Astrocyte of the cerebellum (primary cell): ENCODE measurements at regions of chr16 and their contacts with region 1.

Region 1: GRCh38 chr16:57643147-57643874 is 14.9 kb downstream of the ADGRG1 start:
- DNase-seq: peak; percentile 42
- H3K4me3 ChIP-seq: no peak overlapping the region
- CTCF ChIP-seq: no peak

Region 2: GRCh38 chr16:57424583-57424982 is 218.7 kb before region 1 on chr16:
- in situ Hi-C with region 1: no loop called
- DNase-seq: no peak
- H3K4me3 ChIP-seq: no peak overlapping the region
- CTCF ChIP-seq: no peak

Region 3: DNA sequence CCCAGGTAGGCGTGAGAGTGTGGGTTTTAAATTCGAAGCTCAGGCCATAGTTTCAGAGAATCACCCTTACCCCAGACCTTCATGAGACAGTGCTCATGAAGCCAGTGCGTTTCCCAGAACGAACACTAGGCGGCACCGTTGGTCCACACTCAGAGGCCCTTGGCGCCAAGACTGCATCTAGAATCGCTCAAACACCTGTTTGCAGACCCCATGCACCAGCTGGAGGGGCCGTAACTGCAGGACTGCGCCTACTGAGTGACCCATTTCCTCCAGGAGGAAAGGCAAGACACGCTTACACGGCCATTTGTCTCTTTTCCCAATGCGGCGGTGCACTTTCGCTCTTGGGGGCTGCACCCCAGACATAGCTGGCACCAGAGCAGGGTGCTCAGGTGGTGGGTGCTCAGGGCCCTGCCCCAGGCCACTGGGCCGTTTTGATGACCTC is 66.9 kb before region 1 on chr16:
- in situ Hi-C with region 1: loop called (anchors 5 kb)
- DNase-seq: peak; percentile 49
- H3K4me3 ChIP-seq: no peak overlapping the region
- CTCF ChIP-seq: peak; percentile 99

Region 4: GRCh38 chr16:57741660-57742191 is 98.4 kb after region 1 on chr16:
- in situ Hi-C with region 1: no loop called
- DNase-seq: no peak
- H3K4me3 ChIP-seq: no peak overlapping the region
- CTCF ChIP-seq: no peak